ENCODE measurements at regions of chr7 and their contacts with region 1.

Region 1: DNA sequence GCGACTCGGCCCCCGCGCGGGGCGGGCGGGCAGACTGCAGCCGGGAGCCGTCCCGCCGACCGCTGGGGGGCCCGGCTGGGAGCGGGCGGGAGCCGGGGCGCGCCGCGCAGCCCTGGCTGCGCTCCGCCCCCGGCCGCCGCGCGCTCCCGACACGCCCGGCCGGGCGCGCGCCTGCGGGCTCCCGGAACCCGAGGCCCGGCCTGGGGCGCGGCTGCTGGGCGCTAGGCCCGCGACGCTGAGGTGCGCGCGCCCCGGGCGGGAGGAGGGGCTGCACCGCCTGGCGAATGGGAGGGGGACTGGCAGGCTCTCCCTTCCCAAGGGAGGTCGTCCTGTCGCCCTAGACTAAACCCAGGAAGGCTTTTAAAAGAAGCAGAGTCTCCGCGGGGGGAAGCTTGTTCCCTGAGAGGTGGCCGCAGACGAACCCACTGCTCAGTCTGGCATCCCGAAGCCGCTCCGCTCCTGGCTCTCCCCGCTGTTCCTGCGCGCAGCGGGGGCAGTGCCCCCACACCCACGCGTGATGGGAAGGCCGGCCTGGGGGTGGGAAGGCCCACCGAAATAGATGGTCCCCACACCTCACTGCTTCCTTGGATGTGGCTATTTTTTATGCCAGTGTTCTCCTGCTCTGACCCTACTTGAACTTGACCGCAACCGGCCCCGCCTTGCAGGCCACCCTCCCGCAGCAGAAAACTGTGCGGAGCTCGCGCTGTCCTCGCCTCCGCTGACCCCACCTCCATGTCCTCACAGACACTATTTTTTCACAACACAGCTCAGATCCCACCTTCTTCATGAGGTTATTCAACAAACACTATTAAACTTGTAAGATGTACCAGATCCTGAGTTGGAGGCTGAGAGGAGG is at the start of gene VOPP1:
- DNase-seq: peak in 13 of 14 experiments; percentile 35 to 90 (median 57)
- ATAC-seq: peak; percentile 38
- H3K4me3 ChIP-seq: peak within 1 kb of the TSS; percentile 85
- H3K4me3 Mint-ChIP-seq: peak within 1 kb of the TSS; percentile 96
- H3K27ac ChIP-seq: peak within 1 kb of the TSS; percentile 75 to 89
- H3K27ac Mint-ChIP-seq: peak within 1 kb of the TSS; percentile 87
- H3K4me1 ChIP-seq: peaks cover 59% of the 10 kb centered on the region
- H3K4me1 Mint-ChIP-seq: peaks cover 63% of the 10 kb centered on the region
- H3K27me3 ChIP-seq: no peaks in the 10 kb centered on the region
- H3K27me3 Mint-ChIP-seq: no peaks in the 10 kb centered on the region
- CTCF ChIP-seq: no peak
- total RNA-seq, gene VOPP1: 49.6 to 53.1 TPM

Region 2: GRCh38 chr7:54758702-54759592 is 813.7 kb before region 1 on chr7 and contains the start of gene SEC61G:
- CTCF ChIA-PET with region 1: no interaction called
- POLR2A ChIA-PET with region 1: no interaction called
- intact Hi-C with region 1: loop called (anchors 5 kb)
- DNase-seq: peak; percentile 91 to 98 (median 93)
- ATAC-seq: peak; percentile 97
- H3K4me3 ChIP-seq: peak within 1 kb of the TSS; percentile 69
- H3K4me3 Mint-ChIP-seq: peak within 1 kb of the TSS; percentile 96
- H3K27ac ChIP-seq: peak within 1 kb of the TSS; percentile 63 to 73
- H3K27ac Mint-ChIP-seq: peak within 1 kb of the TSS; percentile 95
- H3K4me1 ChIP-seq: peaks cover 21% of the 10 kb centered on the region
- H3K4me1 Mint-ChIP-seq: peaks cover 54% of the 10 kb centered on the region
- H3K27me3 ChIP-seq: no peaks in the 10 kb centered on the region
- H3K27me3 Mint-ChIP-seq: no peaks in the 10 kb centered on the region
- CTCF ChIP-seq: no peak
- total RNA-seq, gene SEC61G: 43.9 to 51.3 TPM

Region 3: GRCh38 chr7:54764861-54765260 is 807.7 kb before region 1 on chr7:
- CTCF ChIA-PET with region 1: no interaction called
- POLR2A ChIA-PET with region 1: no interaction called
- intact Hi-C with region 1: loop called in 1 of 2 experiments (anchors 5 kb)
- DNase-seq: no peak
- ATAC-seq: no peak
- H3K4me3 ChIP-seq: no peak overlapping the region
- H3K4me3 Mint-ChIP-seq: no peak overlapping the region
- H3K27ac ChIP-seq: no peak overlapping the region
- H3K27ac Mint-ChIP-seq: no peak overlapping the region
- H3K4me1 ChIP-seq: peaks cover 3% of the 10 kb centered on the region
- H3K4me1 Mint-ChIP-seq: peaks cover 6% of the 10 kb centered on the region
- H3K27me3 ChIP-seq: peaks cover 7 to 18% of the 10 kb centered on the region in 2 experiments
- H3K27me3 Mint-ChIP-seq: peaks cover 39% of the 10 kb centered on the region
- CTCF ChIP-seq: no peak

Region 4: DNA sequence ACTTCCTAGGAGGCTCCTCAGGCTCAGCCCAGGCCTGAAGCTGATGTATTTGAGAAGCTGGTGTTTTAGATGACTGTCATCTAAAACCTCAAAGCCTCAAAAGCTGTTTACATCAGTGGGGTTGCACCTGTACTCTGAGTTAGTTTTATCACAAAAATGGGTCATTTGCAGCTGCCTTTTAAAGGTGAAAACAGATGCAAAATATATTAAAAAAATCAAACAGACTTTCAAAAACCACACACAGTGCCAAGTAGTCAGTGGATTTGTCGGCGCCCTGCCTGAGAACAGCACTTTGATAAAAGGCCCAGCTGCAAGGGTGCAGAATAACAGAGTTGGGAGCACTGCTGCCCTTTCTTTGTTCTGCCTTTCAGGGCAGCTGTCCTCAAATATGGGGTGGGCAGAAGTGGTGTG is 103.3 kb before region 1 on chr7:
- CTCF ChIA-PET with region 1: interaction called, 3 read pairs
- POLR2A ChIA-PET with region 1: interaction called, 39 read pairs
- intact Hi-C with region 1: loop called in 1 of 2 experiments (anchors 5 kb)
- DNase-seq: peak in 13 of 14 experiments; percentile 25 to 79 (median 46)
- ATAC-seq: peak; percentile 89
- H3K4me3 ChIP-seq: no peak overlapping the region
- H3K4me3 Mint-ChIP-seq: peak overlapping the region; percentile 82
- H3K27ac ChIP-seq: peak overlapping the region; percentile 66 to 79
- H3K27ac Mint-ChIP-seq: peak overlapping the region; percentile 89
- H3K4me1 ChIP-seq: peaks cover 88% of the 10 kb centered on the region
- H3K4me1 Mint-ChIP-seq: peaks cover 76% of the 10 kb centered on the region
- H3K27me3 ChIP-seq: no peaks in the 10 kb centered on the region
- H3K27me3 Mint-ChIP-seq: no peaks in the 10 kb centered on the region
- CTCF ChIP-seq: no peak

Region 5: DNA sequence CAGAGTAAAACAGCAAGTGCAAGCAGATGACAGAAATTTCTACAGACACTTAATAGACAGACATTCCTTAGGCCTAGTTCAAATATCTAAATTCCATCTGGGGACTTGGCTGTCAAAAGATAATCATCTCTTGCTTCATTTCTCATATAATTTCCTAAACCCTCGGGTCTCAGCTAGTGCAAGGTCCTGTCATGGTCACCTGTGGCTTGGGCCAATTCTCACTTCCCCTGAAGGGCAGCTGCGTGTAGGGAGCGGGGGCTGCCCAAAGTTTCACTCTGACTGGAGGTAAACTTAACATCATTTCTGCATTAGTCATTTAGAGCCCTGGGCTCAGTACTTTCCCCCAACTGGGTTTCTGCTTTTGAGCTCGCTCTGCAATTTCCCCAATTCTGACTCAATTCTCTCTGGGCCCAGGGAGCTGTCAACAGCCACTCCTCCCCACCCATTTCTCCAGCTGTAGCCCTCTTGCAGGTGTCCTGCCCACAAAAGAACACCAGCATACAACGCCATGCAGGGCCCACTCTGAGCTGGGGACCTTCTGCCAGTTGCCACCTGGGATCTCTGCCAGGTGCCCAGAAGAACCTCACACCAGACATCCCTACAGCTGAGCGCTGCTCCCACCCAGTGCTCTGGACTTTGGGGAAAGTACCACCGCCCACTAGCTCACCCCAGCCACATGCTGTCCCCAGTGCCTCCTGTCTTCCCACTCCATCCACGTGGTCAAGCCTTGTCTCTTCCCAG is 38.3 kb before region 1 on chr7:
- CTCF ChIA-PET with region 1: interaction called, 4 read pairs
- POLR2A ChIA-PET with region 1: interaction called, 9 read pairs
- intact Hi-C with region 1: loop called (anchors 5 kb)
- DNase-seq: peak in 13 of 14 experiments; percentile 27 to 84 (median 44)
- ATAC-seq: peak; percentile 45
- H3K4me3 ChIP-seq: peak overlapping the region; percentile 19
- H3K4me3 Mint-ChIP-seq: peak overlapping the region; percentile 76
- H3K27ac ChIP-seq: peak overlapping the region; percentile 59 to 75
- H3K27ac Mint-ChIP-seq: peak overlapping the region; percentile 86
- H3K4me1 ChIP-seq: peaks cover 74% of the 10 kb centered on the region
- H3K4me1 Mint-ChIP-seq: peaks cover 96% of the 10 kb centered on the region
- H3K27me3 ChIP-seq: no peaks in the 10 kb centered on the region
- H3K27me3 Mint-ChIP-seq: no peaks in the 10 kb centered on the region
- CTCF ChIP-seq: no peak

Region 6: GRCh38 chr7:55557666-55558188 is 14.9 kb before region 1 on chr7:
- CTCF ChIA-PET with region 1: interaction called, 3 read pairs
- POLR2A ChIA-PET with region 1: interaction called, 3 read pairs
- intact Hi-C with region 1: loop called in 1 of 2 experiments (anchors 2 kb)
- DNase-seq: peak in 2 of 14 experiments; percentile 28 to 40
- ATAC-seq: peak; percentile 48
- H3K4me3 ChIP-seq: no peak overlapping the region
- H3K4me3 Mint-ChIP-seq: peak overlapping the region; percentile 50
- H3K27ac ChIP-seq: no peak overlapping the region
- H3K27ac Mint-ChIP-seq: peak overlapping the region; percentile 78
- H3K4me1 ChIP-seq: peaks cover 87% of the 10 kb centered on the region
- H3K4me1 Mint-ChIP-seq: peaks cover 100% of the 10 kb centered on the region
- H3K27me3 ChIP-seq: no peaks in the 10 kb centered on the region
- H3K27me3 Mint-ChIP-seq: no peaks in the 10 kb centered on the region
- CTCF ChIP-seq: no peak

Region 7: DNA sequence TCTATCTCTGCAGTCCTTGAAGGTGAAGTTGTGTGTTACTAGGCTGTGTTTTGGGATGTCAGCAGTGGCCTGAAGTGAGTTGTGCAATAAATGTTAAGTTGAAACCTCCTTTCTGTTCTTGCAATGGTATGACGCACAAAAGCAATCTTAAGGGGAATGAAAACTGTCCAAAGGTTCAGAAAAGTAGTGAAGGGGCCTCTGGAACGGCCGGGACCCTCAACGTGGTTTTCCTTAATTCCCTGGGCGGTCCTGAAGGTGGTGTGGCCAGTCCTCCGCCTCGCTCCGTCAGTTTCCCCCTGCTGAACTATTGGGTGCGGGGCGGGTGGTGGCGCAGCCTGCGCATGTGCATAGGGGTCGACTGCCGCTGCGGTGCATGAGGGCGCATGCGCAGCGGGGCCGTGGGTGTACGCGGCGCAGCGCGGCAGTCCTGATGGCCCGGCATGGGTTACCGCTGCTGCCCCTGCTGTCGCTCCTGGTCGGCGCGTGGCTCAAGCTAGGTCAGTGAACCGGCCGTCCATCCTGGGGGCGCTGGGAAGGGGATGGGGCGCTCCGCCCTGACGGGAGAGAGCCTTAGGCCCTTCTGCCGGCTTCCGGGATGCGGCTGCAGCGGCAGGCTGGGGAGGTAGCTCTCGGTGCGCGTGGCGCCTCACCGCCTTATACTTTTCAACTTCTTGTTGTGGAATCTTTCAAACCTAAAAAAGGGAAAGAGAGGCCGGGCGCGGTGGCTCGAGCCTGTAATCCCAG is 491.4 kb after region 1 on chr7 and contains the start of gene SUMF2:
- CTCF ChIA-PET with region 1: no interaction called
- POLR2A ChIA-PET with region 1: no interaction called
- intact Hi-C with region 1: loop called in 1 of 2 experiments (anchors 10 kb)
- DNase-seq: peak; percentile 81 to 97 (median 89)
- ATAC-seq: peak; percentile 89
- H3K4me3 ChIP-seq: peak within 1 kb of the TSS; percentile 95
- H3K4me3 Mint-ChIP-seq: peak within 1 kb of the TSS; percentile 93
- H3K27ac ChIP-seq: peak within 1 kb of the TSS; percentile 82 to 84
- H3K27ac Mint-ChIP-seq: peak within 1 kb of the TSS; percentile 95
- H3K4me1 ChIP-seq: peaks cover 25% of the 10 kb centered on the region
- H3K4me1 Mint-ChIP-seq: peaks cover 31% of the 10 kb centered on the region
- H3K27me3 ChIP-seq: no peaks in the 10 kb centered on the region
- H3K27me3 Mint-ChIP-seq: no peaks in the 10 kb centered on the region
- CTCF ChIP-seq: no peak
- total RNA-seq, gene SUMF2: 95.8 to 102 TPM